ENCODE measurements at regions of chr20 and their contacts with region 1.

Region 1: GRCh38 chr20:23200918-23201317 is 114.8 kb upstream of the CD93 start:
- DNase-seq: peak; percentile 27
- CTCF ChIP-seq: peak; percentile 11

Region 2: GRCh38 chr20:23212064-23212463 is 11.1 kb after region 1 on chr20:
- CTCF ChIA-PET with region 1: interaction called, 11 read pairs
- POLR2A ChIA-PET with region 1: no interaction called
- DNase-seq: no peak
- CTCF ChIP-seq: no peak

Measured in GM10248 (cell line).